Esophagus muscularis mucosa (tissue), 4 donors: ENCODE measurements at regions of chr3 and their contacts with region 1.

Region 1: DNA sequence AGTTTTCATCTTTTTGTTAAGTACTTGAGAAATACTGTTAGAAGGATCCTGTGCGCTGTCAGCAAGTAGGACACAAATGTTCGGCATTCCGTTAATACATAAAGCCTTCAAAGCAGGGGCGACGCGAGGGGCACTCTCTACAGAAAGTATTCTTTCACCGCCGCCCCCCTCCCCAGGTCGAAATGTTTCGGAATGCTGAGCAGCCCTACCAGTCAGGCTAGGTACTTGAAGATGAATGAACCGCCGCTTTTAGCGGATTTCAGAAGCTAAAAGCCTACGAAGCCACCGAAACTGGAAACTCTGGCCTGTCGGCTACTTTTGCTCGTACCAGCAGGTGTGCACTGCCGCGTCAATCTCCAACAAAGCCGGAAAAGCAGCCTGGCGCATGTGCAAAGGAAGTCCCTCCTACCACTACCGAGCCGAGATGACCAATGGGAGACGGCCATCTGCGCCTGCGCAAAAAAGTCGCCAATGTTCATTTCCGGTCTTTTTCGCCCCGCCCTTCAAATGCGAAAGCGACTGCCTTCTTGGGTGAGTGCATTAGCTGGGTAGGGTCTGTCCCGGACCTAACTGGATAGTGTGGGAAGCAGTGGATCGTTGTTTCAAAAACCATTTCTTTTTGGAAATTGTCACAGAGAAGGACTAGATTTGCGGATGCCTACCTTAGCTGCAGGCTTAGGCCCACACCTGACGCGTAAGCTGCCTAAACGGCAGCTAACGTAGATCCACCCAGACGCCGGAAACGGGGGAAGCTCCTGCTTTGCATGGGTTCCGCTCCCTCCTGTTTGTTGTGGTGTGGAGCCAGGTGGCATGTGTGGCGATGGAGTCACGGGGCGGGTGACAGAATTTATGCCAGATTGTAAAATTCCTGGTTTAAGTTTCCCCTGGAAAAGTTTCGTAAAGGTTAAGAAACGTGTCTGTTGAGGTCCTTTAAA is at the start of gene WDR5B:
- DNase-seq: peak; percentile 100
- H3K4me3 ChIP-seq: peak within 1 kb of the TSS; percentile 73 to 86 (median 75)
- H3K27ac ChIP-seq: peak within 1 kb of the TSS; percentile 86 to 89 (median 87)
- H3K4me1 ChIP-seq: peaks cover 27 to 40% (median 35%) of the 10 kb centered on the region in 4 donors
- H3K27me3 ChIP-seq: no peaks in the 10 kb centered on the region
- CTCF ChIP-seq: peak in 1 of 3 experiments; percentile 14
- EP300 ChIP-seq: no peak
- POLR2A ChIP-seq: peak; percentile 71
- total RNA-seq, gene WDR5B: 2.5 to 3.3 (median 3.0) TPM

Region 2: GRCh38 chr3:122014741-122015140 is 401.2 kb before region 1 on chr3:
- intact Hi-C with region 1: no loop called
- DNase-seq: peak; percentile 24
- H3K4me3 ChIP-seq: no peak overlapping the region
- H3K27ac ChIP-seq: no peak overlapping the region
- H3K4me1 ChIP-seq: no peaks in the 10 kb centered on the region
- H3K27me3 ChIP-seq: no peaks in the 10 kb centered on the region
- CTCF ChIP-seq: no peak
- EP300 ChIP-seq: no peak
- POLR2A ChIP-seq: no peak

Region 3: DNA sequence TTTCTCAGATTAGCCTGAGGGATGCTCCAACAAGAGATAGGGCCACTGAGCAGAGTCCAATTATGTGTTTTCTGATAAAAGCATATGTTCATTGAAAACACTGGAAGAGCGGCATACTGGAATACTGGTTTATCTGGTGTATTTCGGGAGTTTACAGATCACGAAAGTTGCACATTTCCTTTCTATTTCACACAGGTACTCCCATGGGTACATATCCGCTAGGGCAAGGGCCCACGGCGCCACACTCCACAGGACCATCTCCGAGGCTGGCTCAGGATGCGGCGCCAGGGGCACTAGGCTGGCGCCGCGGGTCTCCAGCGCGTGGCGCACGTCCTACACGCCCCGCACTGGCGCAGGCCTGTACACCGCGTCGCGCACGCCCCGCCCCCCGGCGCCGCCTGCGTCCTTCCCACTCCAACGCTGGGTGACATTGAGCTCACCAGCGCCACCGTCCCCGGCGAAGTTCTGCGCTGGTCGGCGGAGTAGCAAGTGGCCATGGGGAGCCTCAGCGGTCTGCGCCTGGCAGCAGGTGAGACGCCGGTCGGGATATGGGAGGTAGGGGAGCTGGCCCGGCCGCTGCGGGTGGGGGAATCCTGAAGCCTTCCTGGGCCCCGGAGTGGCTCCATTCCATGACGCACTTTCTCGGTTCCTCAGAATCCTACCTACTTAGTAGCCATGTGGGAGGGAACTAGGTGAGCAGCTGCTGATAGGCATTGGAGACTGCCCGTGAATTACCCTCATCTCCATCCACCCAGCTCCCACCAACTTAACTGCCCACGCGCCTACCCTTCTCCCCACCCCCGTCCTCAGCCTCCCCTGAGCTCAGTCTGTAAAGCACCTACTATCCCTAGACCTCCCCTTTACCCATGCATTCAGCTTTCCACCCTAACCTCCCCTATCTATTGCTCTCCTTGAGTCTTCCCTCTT is 32.0 kb before region 1 on chr3 and contains the start of gene FAM162A:
- intact Hi-C with region 1: loop called (anchors 2 kb)
- DNase-seq: peak; percentile 95
- H3K4me3 ChIP-seq: peak within 1 kb of the TSS; percentile 68 to 85 (median 74)
- H3K27ac ChIP-seq: peak within 1 kb of the TSS; percentile 89 to 94 (median 92)
- H3K4me1 ChIP-seq: peaks cover 18 to 33% (median 29%) of the 10 kb centered on the region in 4 donors
- H3K27me3 ChIP-seq: no peaks in the 10 kb centered on the region
- CTCF ChIP-seq: peak; percentile 45 to 50 (median 48)
- EP300 ChIP-seq: no peak
- POLR2A ChIP-seq: peak; percentile 74
- total RNA-seq, gene FAM162A: 28.2 to 42.7 (median 32.6) TPM